GM12878 (cell line): ENCODE measurements at regions of chr3 and their contacts with region 1.

Region 1: GRCh38 chr3:52897130-52898122 is at the start of gene STIMATE:
- DNase-seq: no peak
- ATAC-seq: peak; percentile 93
- H3K4me3 ChIP-seq: peak within 1 kb of the TSS; percentile 95
- H3K27ac ChIP-seq: peak within 1 kb of the TSS; percentile 40
- H3K4me1 ChIP-seq: peaks cover 13% of the 10 kb centered on the region
- H3K27me3 ChIP-seq: no peaks in the 10 kb centered on the region
- CTCF ChIP-seq: no peak
- EP300 ChIP-seq: no peak
- POLR2A ChIP-seq: peak; percentile 64
- RAD21 ChIP-seq: no peak
- polyA plus RNA-seq, gene STIMATE: 0.24 to 0.68 TPM

Region 2: GRCh38 chr3:52851348-52851747 is 46.1 kb before region 1 on chr3:
- CTCF ChIA-PET with region 1: interaction called, 7 read pairs
- POLR2A ChIA-PET with region 1: no interaction called
- RAD21 ChIA-PET with region 1: interaction called, 3 read pairs
- SMC1A ChIA-PET with region 1: interaction called, 12 read pairs
- in situ Hi-C with region 1: no loop called
- intact Hi-C with region 1: no loop called
- DNase-seq: no peak
- ATAC-seq: peak; percentile 78
- H3K4me3 ChIP-seq: no peak overlapping the region
- H3K27ac ChIP-seq: no peak overlapping the region
- H3K4me1 ChIP-seq: peaks cover 3% of the 10 kb centered on the region
- H3K27me3 ChIP-seq: no peaks in the 10 kb centered on the region
- CTCF ChIP-seq: peak; percentile 65 to 83 (median 71)
- EP300 ChIP-seq: no peak
- POLR2A ChIP-seq: no peak
- RAD21 ChIP-seq: peak; percentile 93

Region 3: GRCh38 chr3:52880474-52880873 is 17.0 kb before region 1 on chr3:
- CTCF ChIA-PET with region 1: interaction called, 28 read pairs
- POLR2A ChIA-PET with region 1: interaction called, 8 read pairs
- RAD21 ChIA-PET with region 1: interaction called, 17 read pairs
- SMC1A ChIA-PET with region 1: interaction called, 25 read pairs
- in situ Hi-C with region 1: no loop called
- intact Hi-C with region 1: no loop called
- DNase-seq: peak; percentile 24
- ATAC-seq: peak; percentile 79
- H3K4me3 ChIP-seq: no peak overlapping the region
- H3K27ac ChIP-seq: peak overlapping the region; percentile 33; the same call in 1 of the 2 replicates
- H3K4me1 ChIP-seq: peaks cover 15% of the 10 kb centered on the region
- H3K27me3 ChIP-seq: no peaks in the 10 kb centered on the region
- CTCF ChIP-seq: no peak
- EP300 ChIP-seq: peak in 1 of 2 experiments; percentile 30; a peak in 1 of 4 replicates
- POLR2A ChIP-seq: no peak
- RAD21 ChIP-seq: no peak

Region 4: DNA sequence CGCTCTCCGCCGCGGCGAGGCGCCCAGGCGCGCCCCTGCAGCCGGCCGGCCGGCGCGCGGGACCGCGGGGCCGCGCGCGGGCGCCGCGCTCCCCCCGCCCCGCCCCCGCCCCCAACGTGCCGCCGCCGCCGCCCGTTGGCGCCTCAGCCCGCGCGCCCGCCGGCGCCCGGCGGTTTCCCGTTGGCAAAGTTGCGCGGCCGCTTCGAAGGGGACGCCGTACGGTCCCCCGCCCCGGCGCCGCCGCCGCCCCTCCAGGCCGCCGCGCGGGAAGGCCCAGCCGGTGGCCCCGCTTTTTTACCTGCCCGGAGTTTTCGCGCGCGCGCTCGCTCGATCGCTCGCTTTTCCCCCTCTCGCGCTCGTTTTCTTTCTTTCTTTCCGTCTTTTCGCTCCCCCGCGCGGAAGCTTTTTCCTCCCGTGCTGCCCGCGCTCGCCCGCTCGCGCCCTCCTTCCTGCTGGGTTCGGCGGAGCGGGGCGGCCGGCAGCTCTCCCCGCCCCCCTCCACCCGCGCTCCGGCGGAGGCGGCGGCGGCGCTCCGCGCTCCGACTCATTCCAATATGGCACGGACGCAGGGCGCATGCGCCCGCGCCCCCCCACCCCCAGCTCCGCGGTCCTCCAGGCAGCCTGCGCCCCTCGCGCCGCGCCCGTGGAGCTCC is 148.2 kb after region 1 on chr3 and contains the start of gene SFMBT1:
- CTCF ChIA-PET with region 1: interaction called, 3 read pairs
- POLR2A ChIA-PET with region 1: interaction called, 5 read pairs
- RAD21 ChIA-PET with region 1: interaction called, 4 read pairs
- SMC1A ChIA-PET with region 1: interaction called, 4 read pairs
- in situ Hi-C with region 1: no loop called
- intact Hi-C with region 1: loop called (anchors 5 kb)
- DNase-seq: no peak
- ATAC-seq: peak; percentile 50
- H3K4me3 ChIP-seq: peak within 1 kb of the TSS; percentile 90
- H3K27ac ChIP-seq: peak within 1 kb of the TSS; percentile 84
- H3K4me1 ChIP-seq: peaks cover 24% of the 10 kb centered on the region
- H3K27me3 ChIP-seq: no peaks in the 10 kb centered on the region
- CTCF ChIP-seq: no peak
- EP300 ChIP-seq: no peak
- POLR2A ChIP-seq: 0 out of 2 replicates have a peak, but pooled peaks have one; percentile 19
- RAD21 ChIP-seq: no peak
- polyA plus RNA-seq, gene SFMBT1: 3.2 to 4.3 TPM